ENCODE measurements at regions of chr3 and their contacts with region 1.

Region 1: DNA sequence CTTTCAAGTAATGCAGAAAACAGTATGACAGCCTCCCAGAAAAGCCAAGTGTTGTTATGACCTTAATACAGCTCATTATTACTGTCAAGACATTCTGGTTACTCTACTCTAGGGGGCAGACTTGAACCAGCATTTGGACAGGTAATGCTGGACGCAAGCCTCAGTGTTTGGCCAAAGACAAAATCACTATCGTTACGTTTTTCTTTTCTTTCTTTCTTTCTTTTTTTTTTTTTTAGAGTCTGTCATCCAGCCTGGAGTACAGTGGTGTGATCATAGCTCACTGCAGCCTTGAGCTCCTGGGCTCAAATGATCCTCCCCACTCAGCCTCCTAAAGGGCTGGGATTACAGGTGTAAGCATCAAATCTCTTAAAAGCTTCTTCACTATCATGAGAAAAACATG is 29.4 kb upstream of the TMEM45A start:
- DNase-seq: peak; percentile 30
- ATAC-seq: peak; percentile 92
- H3K4me3 ChIP-seq: no peak overlapping the region
- H3K27ac ChIP-seq: no peak overlapping the region
- H3K4me1 ChIP-seq: no peaks in the 10 kb centered on the region
- H3K27me3 ChIP-seq: no peaks in the 10 kb centered on the region; the same call in 1 of the 2 replicates
- CTCF ChIP-seq: peak; percentile 79

Region 2: GRCh38 chr3:99520513-99520912 is 942.5 kb before region 1 on chr3:
- CTCF ChIA-PET with region 1: interaction called, 11 read pairs
- POLR2A ChIA-PET with region 1: no interaction called
- in situ Hi-C with region 1: no loop called
- intact Hi-C with region 1: no loop called
- DNase-seq: no peak
- ATAC-seq: no peak
- H3K4me3 ChIP-seq: no peak overlapping the region
- H3K27ac ChIP-seq: no peak overlapping the region
- H3K4me1 ChIP-seq: no peaks in the 10 kb centered on the region
- H3K27me3 ChIP-seq: no peaks in the 10 kb centered on the region
- CTCF ChIP-seq: no peak

Region 3: GRCh38 chr3:100492059-100493006 is 29.3 kb after region 1 on chr3 and contains the start of gene TMEM45A:
- CTCF ChIA-PET with region 1: interaction called, 16 read pairs
- POLR2A ChIA-PET with region 1: no interaction called
- in situ Hi-C with region 1: no loop called
- intact Hi-C with region 1: no loop called
- DNase-seq: peak; percentile 68
- ATAC-seq: peak; percentile 100
- H3K4me3 ChIP-seq: peak within 1 kb of the TSS; percentile 59 to 71
- H3K27ac ChIP-seq: peak within 1 kb of the TSS; percentile 75
- H3K4me1 ChIP-seq: 0 out of 2 replicates have a peak, but pooled peaks cover 4% of the 10 kb centered on the region
- H3K27me3 ChIP-seq: peaks cover 4% of the 10 kb centered on the region; the same call in 1 of the 2 replicates
- CTCF ChIP-seq: no peak
- total RNA-seq, gene TMEM45A: 8.6 TPM

Region 4: DNA sequence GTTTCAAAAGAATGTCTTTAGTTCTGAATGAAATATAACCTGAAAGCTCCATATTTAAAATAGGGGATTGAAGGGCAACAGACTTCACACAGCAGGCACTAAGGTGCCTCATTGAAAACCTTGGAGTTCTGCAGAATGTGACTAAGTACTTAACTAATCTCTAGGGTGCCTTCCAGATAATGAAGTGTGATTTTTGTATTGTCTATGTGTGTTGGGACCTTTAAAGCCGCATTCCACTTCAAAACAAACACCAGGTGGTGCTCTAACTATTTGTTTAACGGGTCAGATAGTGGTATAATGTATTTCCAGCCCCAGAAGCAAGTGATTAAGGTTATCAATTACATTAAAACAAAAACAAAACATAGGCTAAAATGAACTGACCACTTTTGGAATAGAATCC is 274.3 kb after region 1 on chr3:
- CTCF ChIA-PET with region 1: no interaction called
- POLR2A ChIA-PET with region 1: no interaction called
- in situ Hi-C with region 1: no loop called
- intact Hi-C with region 1: no loop called
- DNase-seq: no peak
- ATAC-seq: peak; percentile 70; the same call in 1 of the 2 replicates
- H3K4me3 ChIP-seq: no peak overlapping the region
- H3K27ac ChIP-seq: no peak overlapping the region
- H3K4me1 ChIP-seq: no peaks in the 10 kb centered on the region
- H3K27me3 ChIP-seq: no peaks in the 10 kb centered on the region
- CTCF ChIP-seq: peak; percentile 53; the same call in 1 of the 2 replicates